CD4-positive, alpha-beta memory T cell (primary cell): ENCODE measurements at regions of chr3 and their contacts with region 1.

Region 1: DNA sequence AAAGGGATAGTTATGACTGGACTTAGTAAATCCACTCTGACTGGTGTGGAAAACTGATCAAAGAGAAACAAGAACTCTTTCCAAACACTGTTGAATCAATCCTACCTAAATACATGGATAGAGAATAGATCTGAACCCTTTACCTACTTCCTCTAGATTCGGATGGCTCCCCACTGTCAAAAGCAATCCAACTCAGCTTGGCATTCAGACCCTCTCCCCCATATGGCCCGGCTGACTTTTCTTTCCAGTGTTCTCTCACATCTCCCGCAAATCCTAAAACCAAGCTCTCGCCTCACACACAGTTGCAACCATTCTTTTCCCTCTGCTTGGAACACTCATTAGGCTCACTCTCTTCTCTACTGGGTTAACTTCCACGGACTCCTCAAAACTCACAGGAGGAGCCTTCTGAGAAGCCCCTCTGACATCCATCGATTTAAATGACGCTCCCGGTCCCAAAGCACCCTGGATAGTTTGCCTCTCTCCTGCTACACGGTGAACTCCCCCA is 639 bp downstream of the SPICE1 start:
- DNase-seq: no peak
- H3K4me3 ChIP-seq: peak overlapping the region; percentile 61 to 93
- H3K4me3 Mint-ChIP-seq: no peak overlapping the region
- H3K27ac ChIP-seq: peak overlapping the region; percentile 74
- H3K27ac Mint-ChIP-seq: no peak overlapping the region
- H3K4me1 ChIP-seq: peaks cover 19% of the 10 kb centered on the region
- H3K4me1 Mint-ChIP-seq: peaks cover 6 to 24% (median 9%) of the 10 kb centered on the region in 4 donors
- H3K27me3 ChIP-seq: peaks cover 4% of the 10 kb centered on the region
- H3K27me3 Mint-ChIP-seq: peaks cover 3 to 8% of the 10 kb centered on the region in 2 donors

Region 2: DNA sequence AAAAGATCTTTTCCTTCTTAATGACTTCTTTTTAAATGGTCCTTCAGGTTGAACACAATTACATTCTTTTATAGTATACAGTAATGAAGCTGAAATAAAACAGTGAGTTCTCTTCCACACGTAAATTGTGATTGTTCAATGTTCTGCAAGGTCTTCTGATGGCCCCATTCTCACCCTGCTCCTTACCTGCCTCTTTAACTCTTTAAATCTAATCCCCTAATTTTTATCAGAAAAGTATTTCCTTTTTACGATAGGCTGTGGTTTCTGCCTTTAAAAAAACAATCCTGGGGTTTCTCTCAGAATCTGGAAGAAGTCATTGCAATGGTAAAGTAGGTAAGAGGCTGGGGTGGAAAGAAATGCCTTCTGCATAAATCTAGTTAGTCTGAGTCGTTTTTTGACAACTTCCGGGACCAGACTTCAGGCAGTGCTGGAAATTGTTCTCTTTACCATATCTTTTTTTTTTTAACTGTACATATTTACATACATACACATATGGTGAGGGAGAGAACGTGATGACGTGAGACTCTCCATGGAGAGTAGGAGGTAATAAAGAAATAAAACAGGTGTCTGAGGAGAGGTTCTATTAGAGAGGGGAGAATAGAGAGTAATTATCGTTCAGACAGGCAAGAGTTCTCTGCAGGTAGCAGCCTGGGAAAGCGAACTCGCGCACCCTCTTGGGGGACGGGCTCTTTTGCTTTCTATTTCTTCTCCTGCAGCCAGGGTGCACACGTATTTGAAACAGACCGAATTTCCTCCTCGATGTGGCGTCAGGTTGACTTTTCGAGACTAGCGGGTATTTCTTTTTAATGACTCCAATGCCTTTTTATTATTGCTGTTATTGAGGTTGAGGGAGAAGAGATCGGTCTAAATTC is 17.7 kb after region 1 on chr3 and contains the start of gene SIDT1:
- CTCF ChIA-PET with region 1: interaction called, 15 read pairs
- POLR2A ChIA-PET with region 1: interaction called, 109 read pairs
- intact Hi-C with region 1: loop called (anchors 1 kb)
- DNase-seq: peak; percentile 77 to 84 (median 80)
- H3K4me3 ChIP-seq: peak within 1 kb of the TSS; percentile 79 to 96
- H3K4me3 Mint-ChIP-seq: peak within 1 kb of the TSS; percentile 97 to 100 (median 99)
- H3K27ac ChIP-seq: peak within 1 kb of the TSS; percentile 90
- H3K27ac Mint-ChIP-seq: peak within 1 kb of the TSS; percentile 95 to 100 (median 100)
- H3K4me1 ChIP-seq: peaks cover 45% of the 10 kb centered on the region
- H3K4me1 Mint-ChIP-seq: peaks cover 36 to 55% (median 45%) of the 10 kb centered on the region in 4 donors
- H3K27me3 ChIP-seq: no peaks in the 10 kb centered on the region
- H3K27me3 Mint-ChIP-seq: no peaks in the 10 kb centered on the region
- total RNA-seq, gene SIDT1: 55.0 to 56.1 TPM

Region 3: DNA sequence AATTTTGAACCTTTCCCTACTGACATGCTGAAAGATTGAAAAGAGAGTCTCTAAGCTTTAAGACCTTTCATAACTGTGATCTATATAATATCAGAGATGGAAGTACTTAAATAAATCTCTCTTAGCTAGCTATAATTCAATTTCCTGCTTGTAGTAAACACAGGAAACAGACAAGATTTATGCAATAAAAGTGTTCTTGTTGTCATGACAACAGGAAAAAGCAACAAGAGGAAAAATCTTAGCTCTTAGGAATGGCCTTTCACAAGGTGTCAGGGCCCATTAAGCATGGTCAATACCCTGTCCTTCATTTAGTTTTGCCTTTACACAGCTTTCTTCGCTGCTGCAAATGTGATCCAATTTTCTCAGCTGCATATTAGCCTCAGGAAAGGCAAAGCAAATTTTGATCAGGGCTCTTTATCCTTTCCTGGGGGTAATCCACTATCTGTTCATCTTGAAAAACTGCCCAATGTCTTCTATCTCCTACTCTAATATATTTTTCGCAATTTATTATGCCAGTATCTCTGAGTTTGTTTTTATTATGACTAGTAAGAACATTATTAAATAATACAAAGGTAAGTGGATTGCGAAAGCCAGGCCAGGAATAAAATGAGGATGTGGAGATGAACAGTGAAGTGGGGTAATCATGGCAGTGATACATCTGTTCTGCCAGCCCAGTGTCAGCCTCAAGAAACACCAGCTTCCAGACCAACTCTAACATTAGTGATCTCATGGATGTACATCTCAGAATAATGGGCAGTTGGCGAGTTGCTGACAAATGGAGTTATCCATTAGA is 46.7 kb after region 1 on chr3:
- CTCF ChIA-PET with region 1: interaction called, 16 read pairs
- POLR2A ChIA-PET with region 1: interaction called, 14 read pairs
- intact Hi-C with region 1: no loop called
- DNase-seq: peak in 4 of 5 donors; percentile 31 to 57 (median 38)
- H3K4me3 ChIP-seq: no peak overlapping the region
- H3K4me3 Mint-ChIP-seq: peak overlapping the region in 6 of 8 donors; percentile 13 to 69 (median 25)
- H3K27ac ChIP-seq: peak overlapping the region; percentile 1
- H3K27ac Mint-ChIP-seq: peak overlapping the region; percentile 25 to 94 (median 77)
- H3K4me1 ChIP-seq: peaks cover 41% of the 10 kb centered on the region
- H3K4me1 Mint-ChIP-seq: peaks cover 49 to 63% (median 58%) of the 10 kb centered on the region in 4 donors
- H3K27me3 ChIP-seq: no peaks in the 10 kb centered on the region
- H3K27me3 Mint-ChIP-seq: no peaks in the 10 kb centered on the region

Region 4: DNA sequence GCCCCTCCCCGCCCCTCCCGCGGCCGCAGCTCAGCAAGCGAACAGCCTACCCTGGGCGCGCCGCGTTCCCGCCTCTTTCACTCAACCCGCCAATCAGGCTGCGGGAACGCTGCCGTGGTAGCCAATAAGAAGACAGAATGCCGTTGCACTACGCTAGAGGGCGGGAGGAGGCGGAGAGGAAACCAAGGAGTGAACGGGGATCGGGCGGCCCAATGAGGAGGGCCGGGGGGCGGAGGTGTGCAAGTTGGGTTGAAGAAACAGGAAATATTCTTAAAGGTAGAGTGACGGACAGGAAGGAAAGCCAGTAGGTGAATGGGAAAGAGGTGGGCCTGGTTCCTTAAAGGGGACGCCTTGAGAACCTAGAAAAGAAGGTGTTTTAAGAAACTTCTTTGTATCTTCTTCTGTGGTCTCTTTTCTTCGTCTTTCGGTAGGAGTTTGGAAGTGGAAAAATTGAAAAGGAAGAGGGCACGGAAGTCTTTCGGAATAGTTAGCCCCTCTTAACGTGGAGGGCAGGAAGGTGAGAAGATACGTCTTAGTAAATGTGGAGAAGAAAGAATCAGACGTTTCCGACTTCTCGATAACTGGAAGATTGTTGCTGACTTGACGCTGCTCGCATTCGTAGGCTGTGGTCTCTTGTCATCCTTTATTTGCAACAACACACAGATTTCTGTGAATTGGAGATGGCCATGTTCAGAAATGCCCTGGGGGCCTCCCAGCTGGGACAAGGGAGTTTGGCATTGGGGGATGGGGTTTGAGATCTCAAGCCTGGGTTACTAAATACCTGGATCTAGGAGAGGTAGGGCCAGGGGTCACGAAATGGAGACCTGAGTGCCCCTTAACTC is 182.6 kb after region 1 on chr3:
- CTCF ChIA-PET with region 1: no interaction called
- POLR2A ChIA-PET with region 1: interaction called, 9 read pairs
- intact Hi-C with region 1: loop called (anchors 2 kb)
- DNase-seq: peak; percentile 99 to 100 (median 100)
- H3K4me3 ChIP-seq: peak overlapping the region; percentile 74 to 90
- H3K4me3 Mint-ChIP-seq: no peak overlapping the region
- H3K27ac ChIP-seq: peak overlapping the region; percentile 86
- H3K27ac Mint-ChIP-seq: no peak overlapping the region
- H3K4me1 ChIP-seq: peaks cover 46% of the 10 kb centered on the region
- H3K4me1 Mint-ChIP-seq: peaks cover 20 to 33% (median 25%) of the 10 kb centered on the region in 4 donors
- H3K27me3 ChIP-seq: no peaks in the 10 kb centered on the region
- H3K27me3 Mint-ChIP-seq: no peaks in the 10 kb centered on the region